ENCODE measurements at regions of chr3 and their contacts with region 1.

Region 1: DNA sequence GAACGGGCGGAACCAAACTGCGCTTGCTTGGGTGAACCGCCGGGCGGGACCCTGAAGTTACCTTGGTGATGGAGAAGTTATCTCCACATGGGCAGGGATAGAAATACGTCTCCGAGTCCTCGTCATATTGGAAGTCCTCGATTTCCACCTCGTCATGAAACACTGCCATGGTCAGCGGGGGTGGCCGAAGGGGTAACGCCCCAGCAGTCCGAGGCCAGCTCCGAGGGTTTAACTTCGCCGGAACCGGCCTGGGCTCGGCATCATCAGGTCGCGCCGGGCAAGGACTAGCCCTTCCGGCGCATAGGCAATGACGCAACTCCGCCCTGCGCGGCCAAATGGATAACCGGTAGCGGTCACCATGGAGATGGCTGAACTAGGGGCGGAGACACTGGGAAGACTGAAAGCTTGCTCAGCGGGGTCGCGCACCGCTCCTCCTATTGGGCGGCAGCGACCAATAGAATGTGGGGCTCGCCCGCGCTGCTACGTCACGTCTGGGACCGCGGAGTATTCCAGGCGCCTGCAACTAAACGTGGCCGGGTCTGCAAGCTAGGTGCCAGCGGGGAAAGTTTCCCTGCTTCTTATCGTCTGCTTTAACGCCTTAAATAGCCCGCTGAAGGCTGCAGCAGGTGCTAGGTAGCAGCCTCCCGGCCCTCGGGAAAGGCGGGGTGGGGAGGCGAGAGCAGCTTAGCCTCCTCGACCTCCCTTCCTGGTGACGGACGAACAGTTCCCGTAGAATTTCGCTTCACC is at the starts of genes DPH3 and OXNAD1:
- DNase-seq: peak; percentile 100
- ATAC-seq: peak; percentile 98
- H3K4me3 Mint-ChIP-seq: peak within 1 kb of the TSS; percentile 82
- H3K27ac Mint-ChIP-seq: peak within 1 kb of the TSS; percentile 98
- H3K4me1 Mint-ChIP-seq: peaks cover 35% of the 10 kb centered on the region
- H3K27me3 Mint-ChIP-seq: no peaks in the 10 kb centered on the region
- total RNA-seq, gene DPH3: 13.0 to 17.8 TPM
- total RNA-seq, gene OXNAD1: 27.7 to 34.6 TPM

Region 2: DNA sequence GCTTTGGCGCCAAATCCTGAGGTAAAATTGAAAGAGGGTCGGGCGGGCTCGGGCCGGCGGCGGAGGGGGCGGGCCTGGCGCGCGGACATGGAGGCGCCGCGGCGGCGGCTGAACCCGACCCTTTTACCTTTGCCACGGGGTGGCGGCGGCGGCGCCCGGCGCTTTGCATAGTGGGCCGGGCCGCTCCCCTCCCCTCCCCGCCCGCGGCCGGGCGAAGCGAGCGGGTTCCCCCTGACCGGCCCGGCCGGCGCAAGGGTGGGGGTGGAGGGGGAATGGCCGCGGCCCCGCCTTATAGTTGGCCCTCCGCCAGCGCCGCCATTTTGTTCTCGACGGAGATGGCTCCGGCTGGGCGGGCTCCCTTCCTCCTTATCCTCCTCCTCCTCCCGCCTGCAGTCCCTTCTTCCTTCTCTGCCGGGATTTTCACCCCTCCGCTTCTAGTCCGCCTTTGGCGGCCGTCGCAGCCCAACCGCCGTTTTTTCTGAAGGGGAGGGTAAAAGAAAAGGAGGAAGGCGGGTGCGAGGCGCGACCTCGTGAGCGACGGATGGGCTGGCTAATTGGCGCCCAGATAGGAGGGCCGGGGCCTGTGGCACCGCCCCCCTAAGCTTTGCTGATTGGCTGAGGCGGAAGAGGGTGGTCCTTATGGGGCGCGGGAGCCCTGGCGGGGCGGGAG is 1316.9 kb before region 1 on chr3:
- CTCF ChIA-PET with region 1: no interaction called
- POLR2A ChIA-PET with region 1: no interaction called
- intact Hi-C with region 1: loop called in 1 of 2 experiments (anchors 5 kb)
- DNase-seq: peak; percentile 97
- ATAC-seq: peak; percentile 97
- H3K4me3 Mint-ChIP-seq: peak overlapping the region; percentile 91
- H3K27ac Mint-ChIP-seq: peak overlapping the region; percentile 98
- H3K4me1 Mint-ChIP-seq: peaks cover 49% of the 10 kb centered on the region
- H3K27me3 Mint-ChIP-seq: no peaks in the 10 kb centered on the region

Region 3: GRCh38 chr3:15923640-15924405 is 341.1 kb before region 1 on chr3:
- CTCF ChIA-PET with region 1: no interaction called
- POLR2A ChIA-PET with region 1: no interaction called
- intact Hi-C with region 1: no loop called
- DNase-seq: no peak
- ATAC-seq: peak; percentile 55
- H3K4me3 Mint-ChIP-seq: no peak overlapping the region
- H3K27ac Mint-ChIP-seq: no peak overlapping the region
- H3K4me1 Mint-ChIP-seq: no peaks in the 10 kb centered on the region
- H3K27me3 Mint-ChIP-seq: no peaks in the 10 kb centered on the region

Region 4: DNA sequence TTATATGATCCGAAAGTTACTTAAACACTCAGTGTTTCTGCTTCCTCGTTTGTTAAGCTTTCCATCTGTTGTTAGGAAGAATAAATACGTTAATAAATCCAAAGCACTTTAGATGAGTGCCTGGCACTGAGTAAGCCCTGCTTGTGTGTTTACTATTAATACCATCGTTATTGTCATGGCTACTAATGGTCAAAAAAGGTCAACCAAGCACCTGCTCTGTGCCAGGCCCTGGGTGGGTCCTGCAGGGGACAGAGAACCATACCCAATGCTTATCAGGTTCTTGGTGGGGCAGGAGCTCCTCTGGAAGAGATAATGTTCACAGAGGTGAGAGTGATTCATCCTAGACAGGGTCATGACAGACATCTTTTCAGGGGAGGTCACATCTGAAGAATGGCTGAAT is 50.5 kb before region 1 on chr3:
- CTCF ChIA-PET with region 1: no interaction called
- POLR2A ChIA-PET with region 1: no interaction called
- intact Hi-C with region 1: no loop called
- DNase-seq: no peak
- ATAC-seq: no peak
- H3K4me3 Mint-ChIP-seq: no peak overlapping the region
- H3K27ac Mint-ChIP-seq: no peak overlapping the region
- H3K4me1 Mint-ChIP-seq: no peaks in the 10 kb centered on the region
- H3K27me3 Mint-ChIP-seq: no peaks in the 10 kb centered on the region

Region 5: GRCh38 chr3:16290007-16290826 is 25.3 kb after region 1 on chr3:
- CTCF ChIA-PET with region 1: interaction called, 86 read pairs
- POLR2A ChIA-PET with region 1: interaction called, 5 read pairs
- intact Hi-C with region 1: loop called (anchors 1 to 2 kb)
- DNase-seq: peak; percentile 79
- ATAC-seq: no peak
- H3K4me3 Mint-ChIP-seq: peak overlapping the region; percentile 79
- H3K27ac Mint-ChIP-seq: peak overlapping the region; percentile 94
- H3K4me1 Mint-ChIP-seq: peaks cover 94% of the 10 kb centered on the region
- H3K27me3 Mint-ChIP-seq: no peaks in the 10 kb centered on the region

Region 6: GRCh38 chr3:16511681-16512434 is 247.0 kb after region 1 on chr3:
- CTCF ChIA-PET with region 1: interaction called, 5 read pairs
- POLR2A ChIA-PET with region 1: interaction called, 9 read pairs
- intact Hi-C with region 1: loop called (anchors 1 to 2 kb)
- DNase-seq: peak; percentile 92
- ATAC-seq: peak; percentile 72
- H3K4me3 Mint-ChIP-seq: peak overlapping the region; percentile 99
- H3K27ac Mint-ChIP-seq: peak overlapping the region; percentile 88
- H3K4me1 Mint-ChIP-seq: peaks cover 73% of the 10 kb centered on the region
- H3K27me3 Mint-ChIP-seq: no peaks in the 10 kb centered on the region

Region 7: GRCh38 chr3:16842272-16843270 is 577.7 kb after region 1 on chr3:
- CTCF ChIA-PET with region 1: no interaction called
- POLR2A ChIA-PET with region 1: no interaction called
- intact Hi-C with region 1: loop called in 1 of 2 experiments (anchors 5 kb)
- DNase-seq: peak; percentile 87
- ATAC-seq: peak; percentile 96
- H3K4me3 Mint-ChIP-seq: peak overlapping the region; percentile 69
- H3K27ac Mint-ChIP-seq: peak overlapping the region; percentile 95
- H3K4me1 Mint-ChIP-seq: peaks cover 75% of the 10 kb centered on the region
- H3K27me3 Mint-ChIP-seq: no peaks in the 10 kb centered on the region

Region 8: DNA sequence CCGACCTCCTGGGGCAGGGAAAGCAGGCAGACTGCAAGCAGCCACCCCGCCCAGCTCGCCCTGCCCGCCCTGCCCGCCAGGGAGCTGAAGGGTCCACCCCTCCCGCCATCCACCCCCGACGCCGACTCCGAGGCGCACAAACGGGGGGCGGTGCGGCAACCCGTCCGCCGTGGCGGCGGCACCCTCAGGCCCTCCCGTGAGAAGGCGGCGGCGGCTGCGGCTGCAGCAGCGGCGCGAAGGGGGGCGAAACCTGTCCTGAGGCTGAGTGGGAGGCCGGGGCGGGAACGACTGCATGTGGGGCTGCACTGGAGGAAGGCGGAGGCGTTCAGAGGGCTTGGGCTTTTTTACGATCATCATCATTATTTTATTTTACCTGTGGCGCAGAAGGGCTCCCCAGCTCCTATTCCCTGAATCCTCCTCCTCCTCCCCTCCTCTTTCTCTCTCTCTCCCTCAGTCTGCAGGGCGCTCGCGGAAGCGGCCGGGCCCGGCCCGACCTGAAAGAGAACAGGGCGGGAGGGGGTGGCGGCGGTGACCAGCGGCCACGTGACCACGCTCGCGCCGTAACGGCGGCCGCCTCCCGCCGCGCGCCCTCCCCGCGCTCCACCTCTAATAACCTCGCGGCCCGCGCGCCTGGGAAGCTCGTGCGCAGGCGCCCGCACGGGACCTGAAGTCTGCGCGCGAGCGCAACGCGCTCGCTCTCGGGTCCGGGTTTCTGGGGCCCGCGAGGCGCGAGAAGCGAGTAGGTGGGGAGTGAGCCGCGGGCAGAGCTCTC is 1477.4 kb after region 1 on chr3 and contains the start of gene TBC1D5:
- CTCF ChIA-PET with region 1: no interaction called
- POLR2A ChIA-PET with region 1: no interaction called
- intact Hi-C with region 1: loop called in 1 of 2 experiments (anchors 10 kb)
- DNase-seq: peak; percentile 97
- ATAC-seq: peak; percentile 97
- H3K4me3 Mint-ChIP-seq: peak within 1 kb of the TSS; percentile 93
- H3K27ac Mint-ChIP-seq: peak within 1 kb of the TSS; percentile 93
- H3K4me1 Mint-ChIP-seq: peaks cover 40% of the 10 kb centered on the region
- H3K27me3 Mint-ChIP-seq: no peaks in the 10 kb centered on the region
- total RNA-seq, gene TBC1D5: 53.9 to 56.9 TPM